Activated CD4-positive, alpha-beta memory T cell treated with anti-CD3 and anti-CD28 coated beads, Interleukin-2, amount 10 ng/mL, durations not matched to agents 7 days and 5 days (primary cell): ENCODE measurements at regions of chr1 and their contacts with region 1.

Region 1: DNA sequence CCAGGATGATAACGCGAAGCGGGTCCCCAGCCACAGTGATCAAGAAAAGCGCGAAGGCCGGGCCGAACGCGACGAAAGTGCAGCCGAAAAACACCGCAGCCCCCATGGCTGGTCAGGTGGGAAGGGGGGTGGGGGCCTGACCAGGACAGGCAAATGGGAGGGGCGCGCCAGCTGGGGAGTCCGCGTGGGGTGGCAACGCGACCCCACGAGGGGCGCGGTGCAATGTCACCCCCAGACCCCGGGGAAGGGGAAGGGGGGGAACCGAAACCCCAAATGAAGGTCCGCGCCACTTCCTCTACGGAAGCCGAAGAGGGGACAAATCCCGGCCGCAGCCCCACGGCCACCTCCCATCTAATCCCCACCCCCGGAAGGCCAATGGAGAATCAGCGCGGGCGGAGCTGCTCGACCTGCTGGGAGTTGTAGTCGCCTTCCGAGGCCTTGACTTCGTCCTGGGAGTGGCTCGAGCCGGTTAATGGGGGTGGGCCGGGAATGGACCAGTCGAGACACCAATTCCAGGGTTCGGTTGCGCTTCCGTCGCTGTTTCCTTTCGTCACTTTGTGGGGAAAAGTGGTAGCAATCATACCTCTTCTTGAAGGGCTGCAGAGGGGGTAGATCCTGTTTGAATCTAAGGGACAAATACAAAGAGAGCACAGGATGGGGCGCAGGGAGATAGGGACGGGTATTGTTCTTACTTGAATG is at the start of gene APH1A:
- DNase-seq: peak; percentile 95
- H3K4me3 Mint-ChIP-seq: peak within 1 kb of the TSS; percentile 91
- H3K27ac Mint-ChIP-seq: peak within 1 kb of the TSS; percentile 94
- H3K4me1 Mint-ChIP-seq: peaks cover 38% of the 10 kb centered on the region
- H3K27me3 Mint-ChIP-seq: no peaks in the 10 kb centered on the region
- total RNA-seq, gene APH1A: 142 to 144 TPM

Region 2: DNA sequence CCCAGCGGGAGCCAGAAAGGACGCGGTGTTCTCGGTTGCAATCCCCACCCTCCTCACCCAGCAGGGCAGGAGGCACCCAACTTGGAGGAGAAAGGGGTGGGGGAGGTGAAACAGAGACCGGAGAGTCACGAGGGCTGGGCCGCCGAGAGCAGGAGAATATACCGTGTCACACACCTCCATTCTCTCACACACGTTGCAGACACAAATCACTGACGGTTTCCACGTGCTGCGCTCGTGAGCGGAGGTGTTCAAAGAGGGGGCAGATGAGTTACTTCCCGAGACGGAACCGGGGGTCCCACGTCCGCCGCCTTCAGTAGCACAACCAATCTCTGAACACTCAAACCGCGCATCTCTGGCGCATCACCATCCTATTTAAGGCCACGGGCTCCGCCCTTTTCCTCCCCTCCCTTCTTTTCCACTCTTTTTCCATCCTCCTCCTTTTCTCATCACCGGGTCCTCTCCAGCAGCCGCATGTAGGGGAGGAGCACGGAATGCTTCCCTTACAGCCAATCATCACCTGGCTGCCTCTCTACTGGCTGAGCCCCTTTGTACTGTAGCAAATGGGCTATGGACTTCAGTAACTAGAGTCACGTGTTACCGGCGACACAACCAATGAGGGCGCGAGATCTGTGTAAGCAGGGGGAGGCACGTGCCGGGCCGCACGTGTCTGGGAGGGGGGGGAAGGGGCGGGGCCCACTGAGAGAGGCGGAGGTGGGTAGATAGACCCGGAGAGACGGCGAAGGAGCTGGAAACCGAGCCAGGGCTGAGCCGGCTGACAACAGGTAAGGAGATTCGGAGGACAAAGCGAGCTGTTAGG is 13.2 kb after region 1 on chr1 and contains the start of gene CIART:
- CTCF ChIA-PET with region 1: interaction called, 3 read pairs
- POLR2A ChIA-PET with region 1: interaction called, 17 read pairs
- DNase-seq: peak; percentile 80
- H3K4me3 Mint-ChIP-seq: peak within 1 kb of the TSS; percentile 77
- H3K27ac Mint-ChIP-seq: no peak within 1 kb of the TSS
- H3K4me1 Mint-ChIP-seq: peaks cover 30% of the 10 kb centered on the region
- H3K27me3 Mint-ChIP-seq: peaks cover 10% of the 10 kb centered on the region
- total RNA-seq, gene CIART: 1.5 to 1.7 TPM

Region 3: GRCh38 chr1:150321826-150322166 is 52.9 kb after region 1 on chr1:
- CTCF ChIA-PET with region 1: no interaction called
- POLR2A ChIA-PET with region 1: interaction called, 10 read pairs
- DNase-seq: no peak
- H3K4me3 Mint-ChIP-seq: peak overlapping the region; percentile 98
- H3K27ac Mint-ChIP-seq: peak overlapping the region; percentile 96
- H3K4me1 Mint-ChIP-seq: peaks cover 27% of the 10 kb centered on the region
- H3K27me3 Mint-ChIP-seq: no peaks in the 10 kb centered on the region